ENCODE measurements at regions of chr17 and their contacts with region 1.

Region 1: GRCh38 chr17:70137451-70138230 is 31.7 kb upstream of the KCNJ2 start:
- ATAC-seq: peak; percentile 79 to 96 (median 94)
- H3K4me3 ChIP-seq: no peak overlapping the region
- H3K27ac ChIP-seq: peak overlapping the region in 1 of 2 donors; percentile 32
- H3K4me1 ChIP-seq: peaks cover 15 to 22% of the 10 kb centered on the region in 2 donors

Region 2: GRCh38 chr17:69581061-69581961 is 556.3 kb before region 1 on chr17:
- in situ Hi-C with region 1: loop called in 2 of 9 experiments (anchors 25 kb)
- ATAC-seq: no peak
- H3K4me3 ChIP-seq: no peak overlapping the region
- H3K27ac ChIP-seq: no peak overlapping the region
- H3K4me1 ChIP-seq: no peaks in the 10 kb centered on the region

Region 3: DNA sequence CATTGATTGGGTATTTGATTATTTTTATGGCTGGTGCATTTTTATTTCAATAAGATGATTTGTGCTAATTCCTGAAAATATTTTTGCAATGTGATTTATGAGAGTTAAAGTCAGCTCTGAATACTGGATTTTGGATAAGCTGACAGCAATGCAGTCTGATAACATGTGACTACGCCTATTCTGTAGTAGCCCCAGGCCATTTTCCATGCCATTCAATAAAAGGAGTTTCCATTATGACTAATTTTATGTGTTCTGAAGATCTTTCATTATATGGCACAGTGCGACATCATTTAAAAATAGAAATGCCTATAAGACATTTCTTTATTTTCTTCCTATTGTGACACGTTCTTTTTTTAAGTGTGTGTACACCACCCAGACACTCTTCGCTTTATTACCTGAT is 78.0 kb after region 1 on chr17:
- in situ Hi-C with region 1: no loop called
- ATAC-seq: no peak
- H3K4me3 ChIP-seq: no peak overlapping the region
- H3K27ac ChIP-seq: no peak overlapping the region
- H3K4me1 ChIP-seq: no peaks in the 10 kb centered on the region